ENCODE measurements at regions of chr13 and their contacts with region 1.

Region 1: DNA sequence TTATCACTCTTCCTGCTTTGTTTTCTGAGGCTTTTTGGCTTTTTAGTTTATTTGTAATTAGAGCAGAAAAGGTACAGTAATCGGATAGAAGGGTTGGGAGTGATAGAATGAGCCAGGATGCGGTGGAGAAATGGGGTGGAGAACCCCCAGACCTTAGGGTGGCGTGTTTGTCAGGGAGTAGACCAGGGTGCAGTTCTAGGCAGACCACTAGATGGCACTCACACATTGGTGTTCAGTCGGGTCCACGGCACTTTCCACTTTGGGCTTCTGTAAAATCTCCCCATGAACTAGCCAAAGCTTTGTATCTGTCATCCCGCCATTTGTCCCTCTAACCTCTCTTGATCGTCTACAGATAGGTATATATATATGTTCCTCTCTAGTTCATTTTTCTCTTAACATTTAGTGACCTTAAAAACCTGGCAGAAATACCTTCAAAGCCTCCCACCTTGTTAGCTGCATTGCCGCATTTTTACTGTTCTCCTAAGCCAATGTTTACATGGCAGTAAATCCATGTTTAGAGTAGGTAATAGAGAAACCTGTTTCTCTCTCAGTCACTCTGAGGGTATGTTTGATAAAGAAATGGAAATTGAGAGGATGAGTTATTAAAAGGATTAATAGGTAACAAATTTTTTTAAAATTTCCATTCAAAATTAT is 154.9 kb downstream of the TM9SF2 start:
- DNase-seq: peak; percentile 80 to 85
- H3K4me3 ChIP-seq: 0 out of 2 replicates have a peak overlapping the region, but pooled peaks have one; percentile 12
- H3K4me3 Mint-ChIP-seq: peak overlapping the region; percentile 67
- H3K27ac Mint-ChIP-seq: no peak overlapping the region
- H3K4me1 ChIP-seq: no peaks in the 10 kb centered on the region
- H3K4me1 Mint-ChIP-seq: peaks cover 10% of the 10 kb centered on the region
- H3K27me3 ChIP-seq: no peaks in the 10 kb centered on the region
- H3K27me3 Mint-ChIP-seq: no peaks in the 10 kb centered on the region
- CTCF ChIP-seq: peak; percentile 92

Region 2: DNA sequence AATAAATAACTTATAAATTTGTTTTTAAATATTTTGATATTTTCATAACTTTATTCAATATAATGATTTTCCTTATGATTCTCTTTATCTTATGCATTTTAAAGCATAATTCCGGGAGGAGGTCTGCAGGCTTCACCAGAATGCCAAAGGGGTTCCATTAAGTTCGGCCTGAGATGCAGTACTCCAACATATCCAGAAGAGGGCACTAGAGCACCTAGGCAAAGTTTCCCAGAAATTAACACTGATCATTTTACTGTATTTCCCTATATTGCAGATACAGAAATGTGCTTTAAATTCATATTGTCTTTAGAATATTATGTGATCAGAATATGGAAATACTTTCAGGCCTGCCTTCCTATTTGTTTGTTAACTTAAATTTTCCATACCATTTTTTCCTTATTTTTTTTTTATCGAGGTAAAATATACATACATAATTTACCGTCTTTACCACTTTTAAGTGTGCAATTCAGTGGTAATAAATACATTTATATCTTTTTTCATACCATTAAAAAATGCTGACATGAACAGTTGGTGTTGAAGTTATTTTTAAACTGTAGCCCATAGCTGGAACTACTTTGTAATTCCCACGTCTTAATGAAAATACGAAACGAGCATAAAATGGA is 213.8 kb before region 1 on chr13:
- CTCF ChIA-PET with region 1: no interaction called
- POLR2A ChIA-PET with region 1: no interaction called
- intact Hi-C with region 1: loop called (anchors 1 kb)
- DNase-seq: peak in 1 of 2 experiments; percentile 69
- H3K4me3 ChIP-seq: no peak overlapping the region
- H3K4me3 Mint-ChIP-seq: no peak overlapping the region
- H3K27ac Mint-ChIP-seq: no peak overlapping the region
- H3K4me1 ChIP-seq: no peaks in the 10 kb centered on the region
- H3K4me1 Mint-ChIP-seq: no peaks in the 10 kb centered on the region
- H3K27me3 ChIP-seq: no peaks in the 10 kb centered on the region
- H3K27me3 Mint-ChIP-seq: peaks cover 5% of the 10 kb centered on the region
- CTCF ChIP-seq: peak; percentile 92 to 95

Region 3: GRCh38 chr13:99740251-99740979 is 84.2 kb after region 1 on chr13:
- CTCF ChIA-PET with region 1: no interaction called
- POLR2A ChIA-PET with region 1: no interaction called
- intact Hi-C with region 1: loop called (anchors 5 kb)
- DNase-seq: no peak
- H3K4me3 ChIP-seq: no peak overlapping the region
- H3K4me3 Mint-ChIP-seq: no peak overlapping the region
- H3K27ac Mint-ChIP-seq: no peak overlapping the region
- H3K4me1 ChIP-seq: no peaks in the 10 kb centered on the region
- H3K4me1 Mint-ChIP-seq: no peaks in the 10 kb centered on the region
- H3K27me3 ChIP-seq: no peaks in the 10 kb centered on the region; the same call in 1 of the 2 replicates
- H3K27me3 Mint-ChIP-seq: peaks cover 7% of the 10 kb centered on the region
- CTCF ChIP-seq: no peak

Region 4: GRCh38 chr13:99916366-99917103 is 260.3 kb after region 1 on chr13:
- CTCF ChIA-PET with region 1: no interaction called
- POLR2A ChIA-PET with region 1: no interaction called
- intact Hi-C with region 1: loop called (anchors 1 kb)
- DNase-seq: peak in 1 of 2 experiments; percentile 65
- H3K4me3 ChIP-seq: no peak overlapping the region
- H3K4me3 Mint-ChIP-seq: no peak overlapping the region
- H3K27ac Mint-ChIP-seq: no peak overlapping the region
- H3K4me1 ChIP-seq: no peaks in the 10 kb centered on the region
- H3K4me1 Mint-ChIP-seq: no peaks in the 10 kb centered on the region
- H3K27me3 ChIP-seq: no peaks in the 10 kb centered on the region
- H3K27me3 Mint-ChIP-seq: peaks cover 12% of the 10 kb centered on the region
- CTCF ChIP-seq: peak; percentile 93 to 99

Region 5: GRCh38 chr13:100235311-100235901 is 579.2 kb after region 1 on chr13:
- CTCF ChIA-PET with region 1: interaction called, 7 read pairs
- POLR2A ChIA-PET with region 1: no interaction called
- intact Hi-C with region 1: loop called (anchors 1 kb)
- DNase-seq: peak in 1 of 2 experiments; percentile 69
- H3K4me3 ChIP-seq: no peak overlapping the region
- H3K4me3 Mint-ChIP-seq: no peak overlapping the region
- H3K27ac Mint-ChIP-seq: no peak overlapping the region
- H3K4me1 ChIP-seq: peaks cover 19% of the 10 kb centered on the region
- H3K4me1 Mint-ChIP-seq: peaks cover 10% of the 10 kb centered on the region
- H3K27me3 ChIP-seq: no peaks in the 10 kb centered on the region
- H3K27me3 Mint-ChIP-seq: no peaks in the 10 kb centered on the region
- CTCF ChIP-seq: peak; percentile 67 to 69

Region 6: DNA sequence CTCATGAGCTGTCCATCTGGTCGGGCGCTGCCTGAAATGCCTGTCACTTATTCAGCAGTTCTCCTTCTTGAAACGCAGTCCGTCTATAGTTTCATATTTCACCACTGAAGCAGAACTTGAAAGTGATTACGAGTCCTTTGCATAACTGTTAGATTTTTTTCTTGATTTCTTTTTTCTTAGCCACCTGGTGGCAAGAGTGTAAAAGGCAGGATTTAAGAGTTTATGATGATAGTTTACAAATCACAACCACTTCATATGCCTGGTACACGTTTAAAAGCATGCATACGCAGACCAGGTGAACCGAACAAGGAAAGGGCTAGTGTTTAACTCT is 886.6 kb after region 1 on chr13:
- CTCF ChIA-PET with region 1: interaction called, 4 read pairs
- POLR2A ChIA-PET with region 1: no interaction called
- intact Hi-C with region 1: loop called (anchors 10 kb)
- DNase-seq: no peak
- H3K4me3 ChIP-seq: no peak overlapping the region
- H3K4me3 Mint-ChIP-seq: no peak overlapping the region
- H3K27ac Mint-ChIP-seq: no peak overlapping the region
- H3K4me1 ChIP-seq: no peaks in the 10 kb centered on the region
- H3K4me1 Mint-ChIP-seq: no peaks in the 10 kb centered on the region
- H3K27me3 ChIP-seq: no peaks in the 10 kb centered on the region
- H3K27me3 Mint-ChIP-seq: no peaks in the 10 kb centered on the region
- CTCF ChIP-seq: peak; percentile 45 to 61

Region 7: DNA sequence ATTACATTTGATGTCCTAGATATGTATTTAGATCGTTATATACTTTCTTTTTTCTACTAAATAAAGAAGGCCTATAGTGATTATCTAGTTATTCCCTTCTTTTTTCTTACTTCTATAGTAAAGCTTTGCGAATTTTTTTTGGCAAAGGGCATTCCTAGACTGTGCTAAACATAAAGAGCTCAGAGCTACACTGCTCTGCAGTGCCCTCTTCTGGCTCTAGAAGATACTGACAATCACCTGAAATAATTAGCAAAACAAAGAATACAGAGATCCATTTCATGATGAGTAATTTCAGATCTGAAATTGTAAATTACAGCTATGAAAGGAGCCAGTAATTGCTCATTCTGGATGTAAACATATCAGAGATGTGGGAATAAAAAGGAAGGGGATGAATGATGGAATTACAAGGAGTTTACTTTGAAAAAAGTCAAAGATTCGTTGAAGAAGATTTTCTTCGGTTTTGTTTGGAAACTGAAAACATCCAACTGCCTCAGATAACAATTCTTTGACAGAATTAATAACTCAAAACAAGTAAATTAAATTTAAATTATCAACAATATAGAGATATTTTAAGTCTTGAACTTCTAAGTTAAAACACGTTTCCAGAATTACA is 1471.6 kb after region 1 on chr13:
- CTCF ChIA-PET with region 1: interaction called, 5 read pairs
- POLR2A ChIA-PET with region 1: no interaction called
- intact Hi-C with region 1: loop called (anchors 5 kb)
- DNase-seq: peak in 1 of 2 experiments; percentile 23
- H3K4me3 ChIP-seq: no peak overlapping the region
- H3K4me3 Mint-ChIP-seq: no peak overlapping the region
- H3K27ac Mint-ChIP-seq: no peak overlapping the region
- H3K4me1 ChIP-seq: no peaks in the 10 kb centered on the region
- H3K4me1 Mint-ChIP-seq: no peaks in the 10 kb centered on the region
- H3K27me3 ChIP-seq: no peaks in the 10 kb centered on the region; the same call in 1 of the 2 replicates
- H3K27me3 Mint-ChIP-seq: peaks cover 19% of the 10 kb centered on the region
- CTCF ChIP-seq: peak; percentile 56 to 85

Measured in Caco-2 (cell line).